ENCODE measurements at regions of chr1 and their contacts with region 1.

Region 1: DNA sequence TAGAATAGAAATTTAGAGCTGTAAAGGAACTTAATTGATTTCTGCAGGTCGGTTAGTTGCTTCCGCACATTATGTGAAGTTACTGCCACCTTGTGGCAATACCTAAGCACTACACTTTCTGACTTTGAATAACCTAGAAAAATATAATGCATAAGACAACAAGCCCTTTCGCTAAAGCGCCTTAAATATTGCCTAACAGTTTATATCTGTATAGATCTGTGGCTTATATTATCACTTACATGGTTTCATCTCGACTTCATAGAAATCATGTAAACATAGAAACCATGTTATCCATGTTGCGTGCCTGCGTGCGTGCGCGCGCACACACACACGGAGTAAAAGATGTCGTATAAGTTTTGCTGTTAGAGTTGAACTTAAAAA is 10.9 kb upstream of the IFI16 start:
- DNase-seq: peak in 1 of 2 experiments; percentile 48
- H3K4me3 ChIP-seq: no peak overlapping the region
- H3K4me3 Mint-ChIP-seq: no peak overlapping the region
- H3K27ac Mint-ChIP-seq: no peak overlapping the region
- H3K4me1 ChIP-seq: no peaks in the 10 kb centered on the region
- H3K4me1 Mint-ChIP-seq: no peaks in the 10 kb centered on the region
- H3K27me3 ChIP-seq: no peaks in the 10 kb centered on the region
- H3K27me3 Mint-ChIP-seq: peaks cover 4% of the 10 kb centered on the region
- CTCF ChIP-seq: peak; percentile 74 to 79

Region 2: DNA sequence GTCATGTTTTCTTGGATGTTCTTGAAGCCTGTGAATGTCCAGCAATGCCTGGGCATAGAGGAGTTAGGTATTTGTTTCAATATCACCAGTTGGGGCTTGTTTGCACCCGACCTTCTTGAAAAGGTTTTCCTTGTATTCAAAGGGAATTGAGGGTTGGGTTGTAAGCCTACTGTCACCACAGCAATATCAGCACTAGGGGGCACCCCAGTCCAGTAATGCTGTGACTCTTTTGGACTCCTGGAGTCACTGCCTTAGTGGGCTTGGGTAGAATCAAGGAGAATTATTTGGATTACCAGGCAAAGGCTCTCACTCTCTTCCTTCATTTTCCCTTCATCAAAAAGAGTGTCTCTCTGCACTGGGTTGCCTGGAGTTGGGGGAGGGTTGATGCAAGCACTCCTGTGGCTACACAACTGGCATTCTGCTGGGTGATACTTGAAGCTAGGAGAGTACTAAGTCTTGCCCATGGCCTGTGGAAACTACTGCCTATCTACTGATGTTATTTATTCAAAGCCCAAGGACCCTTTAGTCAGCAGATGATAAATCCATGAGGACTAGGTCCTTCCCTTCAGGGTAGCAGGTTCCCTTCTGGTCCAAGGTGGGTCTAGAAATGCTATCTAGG is 492.3 kb before region 1 on chr1:
- CTCF ChIA-PET with region 1: no interaction called
- POLR2A ChIA-PET with region 1: no interaction called
- intact Hi-C with region 1: loop called (anchors 1 kb)
- DNase-seq: peak; percentile 37 to 41
- H3K4me3 ChIP-seq: no peak overlapping the region
- H3K4me3 Mint-ChIP-seq: no peak overlapping the region
- H3K27ac Mint-ChIP-seq: no peak overlapping the region
- H3K4me1 ChIP-seq: no peaks in the 10 kb centered on the region
- H3K4me1 Mint-ChIP-seq: no peaks in the 10 kb centered on the region
- H3K27me3 ChIP-seq: no peaks in the 10 kb centered on the region; the same call in 1 of the 2 replicates
- H3K27me3 Mint-ChIP-seq: peaks cover 2% of the 10 kb centered on the region
- CTCF ChIP-seq: peak; percentile 29 to 36

Region 3: GRCh38 chr1:158798531-158798930 is 200.2 kb before region 1 on chr1:
- CTCF ChIA-PET with region 1: no interaction called
- POLR2A ChIA-PET with region 1: no interaction called
- intact Hi-C with region 1: loop called (anchors 5 kb)
- DNase-seq: no peak
- H3K4me3 ChIP-seq: no peak overlapping the region
- H3K4me3 Mint-ChIP-seq: no peak overlapping the region
- H3K27ac Mint-ChIP-seq: no peak overlapping the region
- H3K4me1 ChIP-seq: no peaks in the 10 kb centered on the region
- H3K4me1 Mint-ChIP-seq: no peaks in the 10 kb centered on the region
- H3K27me3 ChIP-seq: no peaks in the 10 kb centered on the region
- H3K27me3 Mint-ChIP-seq: peaks cover 3% of the 10 kb centered on the region
- CTCF ChIP-seq: no peak

Region 4: DNA sequence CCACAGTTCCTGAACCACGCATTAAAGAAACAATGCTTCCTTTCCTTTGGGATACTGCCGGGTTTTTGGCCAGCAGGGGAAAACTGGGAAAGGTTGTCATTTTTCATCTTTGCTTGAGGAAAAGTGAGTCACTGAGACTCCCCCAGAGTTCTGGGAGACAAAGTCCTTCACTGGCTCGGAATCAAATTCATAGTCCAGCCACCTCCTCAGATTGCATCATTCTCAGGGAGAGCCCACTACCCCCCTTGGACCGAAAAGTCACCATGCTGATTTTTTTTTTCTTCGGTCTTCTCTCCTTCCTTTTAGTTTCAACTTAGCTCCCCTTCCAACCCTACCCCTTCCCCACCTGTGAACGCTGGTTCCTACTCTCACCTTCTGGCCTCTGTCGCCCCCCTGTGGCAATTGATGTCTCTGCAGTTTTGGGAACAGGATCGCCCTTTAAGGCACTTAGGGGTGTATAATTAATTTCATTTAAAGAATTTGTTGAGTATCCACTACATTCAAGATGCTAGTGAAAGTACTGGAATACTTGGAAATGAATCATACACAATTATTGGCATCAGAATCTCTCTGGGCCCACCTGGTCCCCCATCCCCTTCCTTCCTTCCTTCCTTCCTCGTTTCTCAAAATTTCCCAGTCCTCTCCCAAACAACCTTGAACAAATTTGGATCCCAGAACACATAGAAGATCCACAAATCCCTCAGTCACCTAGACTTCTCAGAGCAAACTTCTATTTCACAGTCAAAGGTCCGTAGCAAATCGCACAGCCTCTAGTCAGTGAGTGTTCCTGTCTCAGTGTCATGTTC is 212.8 kb after region 1 on chr1:
- CTCF ChIA-PET with region 1: no interaction called
- POLR2A ChIA-PET with region 1: no interaction called
- intact Hi-C with region 1: no loop called
- DNase-seq: peak; percentile 49 to 63
- H3K4me3 ChIP-seq: no peak overlapping the region
- H3K4me3 Mint-ChIP-seq: peak overlapping the region; percentile 16
- H3K27ac Mint-ChIP-seq: no peak overlapping the region
- H3K4me1 ChIP-seq: no peaks in the 10 kb centered on the region
- H3K4me1 Mint-ChIP-seq: peaks cover 10% of the 10 kb centered on the region
- H3K27me3 ChIP-seq: no peaks in the 10 kb centered on the region
- H3K27me3 Mint-ChIP-seq: peaks cover 22% of the 10 kb centered on the region
- CTCF ChIP-seq: peak; percentile 88 to 91

Measured in Caco-2 (cell line).